Left cardiac atrium (tissue), 4 donors: ENCODE measurements at regions of chr19 and their contacts with region 1.

Region 1: DNA sequence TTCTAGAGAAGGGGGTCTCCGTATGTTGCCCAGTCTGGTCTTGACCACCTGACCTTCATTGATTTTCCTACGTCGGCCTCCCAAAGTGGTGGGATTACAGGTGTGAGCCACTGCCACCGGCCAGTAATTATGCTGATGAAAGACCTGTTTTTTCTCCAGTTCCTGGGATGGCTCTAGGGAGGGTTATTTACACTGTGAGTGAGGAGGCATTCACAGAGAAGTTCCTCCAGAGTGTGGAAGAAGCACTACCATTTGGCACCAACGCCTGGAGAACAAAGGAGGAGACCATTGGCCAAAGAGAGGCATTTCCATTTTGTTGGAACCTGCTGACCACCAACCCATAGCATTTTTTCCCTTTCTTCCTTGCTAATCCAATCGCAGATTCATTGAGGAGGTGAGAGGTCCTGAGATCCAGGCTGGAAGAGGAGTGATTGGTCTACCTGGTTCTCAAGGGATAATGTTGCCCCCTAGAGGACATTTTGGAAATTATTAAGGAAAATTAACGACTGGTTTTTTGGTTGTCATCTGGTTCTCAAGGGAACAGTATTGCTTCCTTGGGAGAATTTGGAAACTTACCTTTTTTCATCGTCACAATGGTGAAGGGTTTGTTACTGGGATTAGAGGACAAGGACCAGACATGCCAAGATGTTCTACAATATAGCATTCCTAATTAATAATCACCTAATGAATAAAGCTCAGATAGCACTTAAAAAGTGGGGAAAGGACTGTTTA is 5.5 kb upstream of the SAE1 start:
- DNase-seq: no peak
- ATAC-seq: peak; percentile 73 to 83

Region 2: GRCh38 chr19:46990991-46991676 is 134.0 kb before region 1 on chr19:
- intact Hi-C with region 1: no loop called
- DNase-seq: peak; percentile 88
- ATAC-seq: peak; percentile 79 to 80

Region 3: GRCh38 chr19:47013041-47013517 is 112.0 kb before region 1 on chr19:
- intact Hi-C with region 1: loop called in 1 of 2 experiments (anchors 5 kb)
- DNase-seq: peak; percentile 83
- ATAC-seq: peak; percentile 93 to 95

Region 4: DNA sequence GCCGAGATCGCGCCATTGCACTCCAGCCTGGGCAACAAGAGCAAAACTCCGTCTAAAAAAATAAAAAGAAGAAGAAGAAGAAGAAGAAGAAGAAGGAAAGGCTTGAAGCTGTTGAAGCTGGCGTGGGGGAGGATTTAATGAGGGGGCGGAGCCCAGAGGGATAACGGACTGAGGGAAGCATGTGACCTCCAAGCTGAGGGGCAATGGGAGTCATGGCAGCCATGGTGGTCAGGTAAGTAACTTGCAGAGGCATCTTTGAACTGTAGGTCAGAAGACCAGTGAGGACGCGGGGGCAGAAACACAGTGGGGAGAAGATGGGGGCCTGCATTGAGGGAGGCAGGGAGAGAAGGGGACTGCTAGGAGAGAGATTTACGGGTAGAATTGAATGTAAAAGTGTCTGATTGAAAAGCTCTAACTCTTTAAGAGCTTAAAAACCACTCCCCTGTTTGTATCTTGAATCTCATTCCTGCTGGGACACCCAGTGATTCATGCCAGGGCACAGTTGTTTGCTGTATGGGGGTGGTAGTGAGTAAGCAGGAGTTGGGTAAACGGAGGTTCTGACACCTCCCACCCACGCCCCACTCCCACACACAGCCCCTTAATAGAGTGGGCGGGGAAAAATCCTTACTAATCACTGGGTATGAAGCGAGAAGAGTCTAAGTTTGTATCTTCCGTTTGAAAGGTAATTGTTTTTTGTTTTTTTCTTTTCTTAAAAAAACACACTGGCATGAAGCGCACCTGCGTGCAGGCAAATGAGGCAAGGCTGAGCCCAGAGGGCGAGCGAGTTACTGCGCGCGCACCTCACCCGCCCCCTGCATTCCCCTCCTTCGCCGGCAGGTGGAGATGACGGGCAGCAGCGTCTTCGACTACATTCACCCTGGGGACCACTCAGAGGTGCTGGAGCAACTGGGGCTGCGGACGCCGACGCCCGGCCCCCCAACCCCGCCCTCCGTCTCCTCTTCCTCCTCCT is 89.7 kb before region 1 on chr19:
- intact Hi-C with region 1: loop called (anchors 10 kb)
- DNase-seq: peak; percentile 83
- ATAC-seq: peak; percentile 92 to 94

Region 5: DNA sequence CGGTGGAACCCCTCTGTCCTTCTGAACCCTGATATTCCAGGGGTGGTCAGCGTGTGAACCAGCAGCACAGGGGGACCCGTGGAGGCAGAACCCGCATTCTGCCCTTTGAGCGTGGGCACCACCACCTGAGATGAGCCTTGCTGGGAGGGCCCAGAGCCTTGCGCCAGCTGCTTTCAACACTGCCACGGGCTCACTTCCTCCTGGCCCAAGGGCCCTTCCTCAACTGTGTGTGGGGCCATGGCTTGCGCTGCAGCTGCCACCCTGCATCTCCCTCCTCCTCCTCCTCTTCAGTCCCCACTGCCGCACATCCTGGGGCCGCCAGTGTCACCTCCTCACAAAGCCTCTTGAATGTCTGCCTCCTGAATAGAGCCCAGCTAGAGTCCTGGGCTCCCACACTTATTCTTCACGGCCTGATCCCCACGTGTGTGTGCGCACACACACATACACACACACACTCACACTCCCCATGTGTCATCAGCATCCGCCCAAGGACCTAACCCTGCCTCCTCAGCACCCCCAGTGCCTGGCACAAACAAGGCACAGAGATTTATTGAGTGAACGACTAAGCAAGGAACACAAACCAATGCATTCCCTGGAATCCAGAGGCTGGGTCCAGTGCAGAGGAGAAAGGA is 49.8 kb before region 1 on chr19:
- intact Hi-C with region 1: loop called (anchors 1 to 2 kb)
- DNase-seq: no peak
- ATAC-seq: no peak

Region 6: GRCh38 chr19:47081111-47081510 is 44.0 kb before region 1 on chr19:
- intact Hi-C with region 1: loop called (anchors 1 to 2 kb)
- DNase-seq: no peak
- ATAC-seq: no peak

Region 7: DNA sequence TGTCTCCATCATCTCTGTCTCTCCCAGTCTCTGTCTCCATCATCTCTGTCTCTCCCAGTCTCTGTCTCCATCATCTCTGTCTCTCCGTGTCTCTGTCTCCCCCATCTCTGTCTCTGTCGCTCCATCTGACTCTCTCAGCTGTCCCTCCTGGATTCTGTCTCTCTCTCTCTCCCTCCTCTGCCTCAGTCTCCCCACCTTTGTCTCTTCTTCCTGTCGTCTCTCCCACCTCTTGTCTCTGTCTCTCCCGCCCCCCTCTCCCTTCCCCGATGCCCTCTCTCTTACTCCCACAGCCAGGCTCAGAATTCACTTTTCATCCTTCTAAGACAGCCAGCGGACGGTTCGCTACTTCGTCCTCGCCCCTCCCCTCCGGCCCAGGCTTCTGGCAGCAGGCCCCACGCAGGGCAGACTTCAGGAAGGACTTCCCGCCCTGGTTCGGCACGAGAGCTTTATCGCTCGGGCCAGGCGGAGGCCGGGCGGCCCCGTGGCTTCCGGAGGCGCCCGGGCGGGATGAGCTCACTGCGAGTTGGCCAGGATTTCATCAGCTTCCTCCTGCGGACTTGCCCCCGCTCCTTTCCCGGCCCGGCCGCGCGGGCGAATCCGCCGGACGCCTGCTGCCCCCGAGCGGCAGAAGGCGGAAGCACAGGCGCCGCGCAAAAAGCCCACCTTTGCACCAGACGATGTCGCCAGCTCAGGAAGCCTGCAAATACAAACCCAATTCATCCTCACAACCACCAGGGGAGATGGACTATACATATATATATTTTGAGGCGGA is 118.9 kb after region 1 on chr19:
- intact Hi-C with region 1: no loop called
- DNase-seq: peak; percentile 95
- ATAC-seq: peak; percentile 92 to 93